CD8-positive, alpha-beta T cell (primary cell): ENCODE measurements at regions of chr19 and their contacts with region 1.

Region 1: DNA sequence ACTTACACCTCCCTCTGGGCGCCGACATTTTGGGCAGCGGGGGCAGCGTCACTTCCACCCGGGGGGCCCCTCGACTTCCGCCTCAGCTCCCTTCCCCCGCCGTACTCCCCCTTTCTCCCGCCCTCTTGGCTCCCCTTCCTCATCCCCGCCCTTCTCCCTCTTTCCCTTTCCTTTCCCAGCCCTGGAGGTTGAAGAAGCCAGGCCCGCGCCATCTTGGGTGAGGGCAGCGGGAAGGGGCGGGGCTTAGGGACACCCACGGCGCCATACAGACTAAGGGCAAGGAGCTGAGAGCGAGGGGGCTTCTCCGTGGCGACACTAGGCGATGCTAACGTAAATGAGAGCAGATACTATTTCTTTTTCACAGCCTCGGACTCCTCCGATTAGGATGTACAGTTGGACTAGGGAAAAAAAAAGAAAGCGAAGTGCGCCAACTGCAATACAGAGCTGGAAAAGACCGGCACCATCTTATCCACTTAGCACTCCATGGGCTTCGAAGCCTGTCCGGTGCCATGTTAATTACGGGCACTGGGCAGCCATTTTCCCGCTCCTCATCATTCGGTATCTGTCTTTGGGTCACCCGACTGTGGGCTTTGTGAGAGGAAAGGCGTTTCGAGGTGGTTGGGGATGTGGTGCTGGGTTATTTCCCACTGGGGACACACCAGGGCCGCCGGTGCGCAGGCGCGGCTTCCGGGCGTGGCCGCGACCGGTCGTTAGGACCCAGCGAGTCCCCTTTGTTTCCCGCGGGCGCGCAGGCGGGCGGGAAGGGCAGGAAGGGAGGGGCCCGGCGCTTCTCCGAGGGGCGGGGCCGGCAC is at the start of gene FIZ1:
- DNase-seq: peak; percentile 90 to 98 (median 95)
- ATAC-seq: peak; percentile 69
- H3K4me3 ChIP-seq: peak within 1 kb of the TSS; percentile 80 to 81
- H3K4me3 Mint-ChIP-seq: peak within 1 kb of the TSS; percentile 100
- H3K27ac ChIP-seq: peak within 1 kb of the TSS; percentile 75 to 95
- H3K27ac Mint-ChIP-seq: peak within 1 kb of the TSS; percentile 99
- H3K4me1 ChIP-seq: peaks cover 14% of the 10 kb centered on the region
- H3K4me1 Mint-ChIP-seq: peaks cover 29% of the 10 kb centered on the region
- H3K27me3 ChIP-seq: no peaks in the 10 kb centered on the region
- H3K27me3 Mint-ChIP-seq: no peaks in the 10 kb centered on the region
- CTCF ChIP-seq: no peak
- total RNA-seq, gene FIZ1: 6.7 to 8.4 TPM

Region 2: GRCh38 chr19:55117636-55118391 is 481.9 kb before region 1 on chr19 and contains the start of gene PPP1R12C:
- CTCF ChIA-PET with region 1: no interaction called
- POLR2A ChIA-PET with region 1: interaction called, 3 read pairs
- intact Hi-C with region 1: loop called (anchors 2 kb)
- DNase-seq: peak; percentile 89 to 99 (median 97)
- ATAC-seq: peak; percentile 89
- H3K4me3 ChIP-seq: peak within 1 kb of the TSS; percentile 83 to 89
- H3K4me3 Mint-ChIP-seq: peak within 1 kb of the TSS; percentile 97
- H3K27ac ChIP-seq: peak within 1 kb of the TSS; percentile 61 to 84
- H3K27ac Mint-ChIP-seq: peak within 1 kb of the TSS; percentile 93
- H3K4me1 ChIP-seq: peaks cover 19% of the 10 kb centered on the region
- H3K4me1 Mint-ChIP-seq: peaks cover 34% of the 10 kb centered on the region
- H3K27me3 ChIP-seq: no peaks in the 10 kb centered on the region
- H3K27me3 Mint-ChIP-seq: no peaks in the 10 kb centered on the region
- CTCF ChIP-seq: no peak
- total RNA-seq, gene PPP1R12C: 93.8 to 97.6 TPM

Region 3: GRCh38 chr19:55476100-55476775 is 123.4 kb before region 1 on chr19 and contains the start of gene ZNF628:
- CTCF ChIA-PET with region 1: no interaction called
- POLR2A ChIA-PET with region 1: interaction called, 8 read pairs
- intact Hi-C with region 1: loop called (anchors 1 kb)
- DNase-seq: peak; percentile 95 to 99 (median 98)
- ATAC-seq: peak; percentile 93
- H3K4me3 ChIP-seq: peak within 1 kb of the TSS; percentile 70 to 72
- H3K4me3 Mint-ChIP-seq: peak within 1 kb of the TSS; percentile 85
- H3K27ac ChIP-seq: peak within 1 kb of the TSS; percentile 58 to 91
- H3K27ac Mint-ChIP-seq: peak within 1 kb of the TSS; percentile 88
- H3K4me1 ChIP-seq: peaks cover 17% of the 10 kb centered on the region
- H3K4me1 Mint-ChIP-seq: peaks cover 34% of the 10 kb centered on the region
- H3K27me3 ChIP-seq: no peaks in the 10 kb centered on the region
- H3K27me3 Mint-ChIP-seq: no peaks in the 10 kb centered on the region
- CTCF ChIP-seq: no peak
- total RNA-seq, gene ZNF628: 27.0 to 27.8 TPM

Region 4: GRCh38 chr19:55563261-55563690 is 36.4 kb before region 1 on chr19:
- CTCF ChIA-PET with region 1: no interaction called
- POLR2A ChIA-PET with region 1: no interaction called
- intact Hi-C with region 1: no loop called
- DNase-seq: no peak
- ATAC-seq: no peak
- H3K4me3 ChIP-seq: no peak overlapping the region
- H3K4me3 Mint-ChIP-seq: no peak overlapping the region
- H3K27ac ChIP-seq: no peak overlapping the region
- H3K27ac Mint-ChIP-seq: no peak overlapping the region
- H3K4me1 ChIP-seq: no peaks in the 10 kb centered on the region
- H3K4me1 Mint-ChIP-seq: no peaks in the 10 kb centered on the region
- H3K27me3 ChIP-seq: no peaks in the 10 kb centered on the region
- H3K27me3 Mint-ChIP-seq: peaks cover 21% of the 10 kb centered on the region
- CTCF ChIP-seq: no peak

Region 5: DNA sequence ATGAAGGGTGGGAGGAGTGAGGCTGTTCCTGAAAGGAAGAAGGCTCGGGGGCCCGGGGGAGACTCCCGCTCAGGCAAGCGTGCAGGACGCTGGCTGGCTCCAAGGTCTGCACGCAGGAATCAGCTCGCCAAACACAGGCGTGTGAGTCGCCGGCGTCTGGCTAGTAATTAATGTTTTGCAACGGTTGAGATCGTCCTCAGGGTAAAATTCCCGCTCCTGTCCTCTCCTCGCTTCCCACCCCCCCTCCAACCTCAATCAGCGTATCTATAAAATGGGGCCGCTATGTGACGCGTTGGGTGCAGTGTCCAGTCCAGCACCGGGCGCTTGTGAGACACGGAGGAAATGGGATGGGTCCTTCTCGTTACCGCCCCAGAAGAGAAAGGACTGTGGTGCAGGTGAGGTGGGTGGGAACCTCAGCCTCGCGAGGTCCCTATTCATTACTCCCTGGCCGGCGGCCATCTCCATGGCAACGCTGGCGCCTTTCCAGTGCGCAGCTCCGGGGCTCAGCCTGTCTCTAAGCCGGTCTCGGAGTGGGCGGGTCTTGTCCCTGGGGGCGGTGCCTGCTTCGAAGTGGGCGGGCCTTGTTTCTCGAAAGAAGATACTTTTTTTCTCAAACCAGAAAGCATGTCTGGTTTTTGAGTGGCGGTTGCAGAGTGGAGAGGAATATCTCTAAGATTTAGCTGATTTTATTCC is 12.6 kb before region 1 on chr19:
- CTCF ChIA-PET with region 1: interaction called, 4 read pairs
- POLR2A ChIA-PET with region 1: interaction called, 16 read pairs
- intact Hi-C with region 1: loop called (anchors 1 kb)
- DNase-seq: peak; percentile 86 to 95 (median 92)
- ATAC-seq: peak; percentile 96
- H3K4me3 ChIP-seq: peak overlapping the region; percentile 32 to 55
- H3K4me3 Mint-ChIP-seq: peak overlapping the region; percentile 88
- H3K27ac ChIP-seq: peak overlapping the region in 1 of 2 experiments; percentile 24
- H3K27ac Mint-ChIP-seq: peak overlapping the region; percentile 45
- H3K4me1 ChIP-seq: peaks cover 25% of the 10 kb centered on the region
- H3K4me1 Mint-ChIP-seq: peaks cover 30% of the 10 kb centered on the region
- H3K27me3 ChIP-seq: no peaks in the 10 kb centered on the region
- H3K27me3 Mint-ChIP-seq: no peaks in the 10 kb centered on the region
- CTCF ChIP-seq: no peak

Region 6: GRCh38 chr19:55643348-55644176 is 43.9 kb after region 1 on chr19 and contains the start of gene ZNF581:
- CTCF ChIA-PET with region 1: interaction called, 3 read pairs
- POLR2A ChIA-PET with region 1: interaction called, 16 read pairs
- intact Hi-C with region 1: loop called (anchors 1 kb)
- DNase-seq: peak; percentile 53 to 91 (median 77)
- ATAC-seq: peak; percentile 55
- H3K4me3 ChIP-seq: peak within 1 kb of the TSS; percentile 66 to 73
- H3K4me3 Mint-ChIP-seq: peak within 1 kb of the TSS; percentile 95
- H3K27ac ChIP-seq: peak within 1 kb of the TSS; percentile 65 to 79
- H3K27ac Mint-ChIP-seq: peak within 1 kb of the TSS; percentile 97
- H3K4me1 ChIP-seq: peaks cover 42% of the 10 kb centered on the region
- H3K4me1 Mint-ChIP-seq: peaks cover 55% of the 10 kb centered on the region
- H3K27me3 ChIP-seq: no peaks in the 10 kb centered on the region
- H3K27me3 Mint-ChIP-seq: no peaks in the 10 kb centered on the region
- CTCF ChIP-seq: no peak
- total RNA-seq, gene ZNF581: 25.6 to 25.7 TPM

Region 7: GRCh38 chr19:56140583-56141416 is 541.1 kb after region 1 on chr19 and contains the start of gene ZNF444:
- CTCF ChIA-PET with region 1: no interaction called
- POLR2A ChIA-PET with region 1: no interaction called
- intact Hi-C with region 1: loop called in 1 of 2 experiments (anchors 2 kb)
- DNase-seq: peak; percentile 98 to 100 (median 99)
- ATAC-seq: peak; percentile 84
- H3K4me3 ChIP-seq: peak within 1 kb of the TSS; percentile 69 to 74
- H3K4me3 Mint-ChIP-seq: peak within 1 kb of the TSS; percentile 92
- H3K27ac ChIP-seq: peak within 1 kb of the TSS; percentile 66 to 86
- H3K27ac Mint-ChIP-seq: peak within 1 kb of the TSS; percentile 93
- H3K4me1 ChIP-seq: peaks cover 20% of the 10 kb centered on the region
- H3K4me1 Mint-ChIP-seq: peaks cover 38% of the 10 kb centered on the region
- H3K27me3 ChIP-seq: no peaks in the 10 kb centered on the region
- H3K27me3 Mint-ChIP-seq: no peaks in the 10 kb centered on the region
- CTCF ChIP-seq: no peak
- total RNA-seq, gene ZNF444: 17.2 to 18.6 TPM